ENCODE measurements at regions of chr3 and their contacts with region 1.

Region 1: GRCh38 chr3:130609166-130609979 is 92.4 kb downstream of the COL6A6 start:
- DNase-seq: peak; percentile 31 to 48
- ATAC-seq: peak; percentile 88 to 97 (median 92)
- H3K4me3 ChIP-seq: no peak overlapping the region
- H3K27ac ChIP-seq: no peak overlapping the region
- H3K4me1 ChIP-seq: no peaks in the 10 kb centered on the region
- H3K27me3 ChIP-seq: no peaks in the 10 kb centered on the region
- CTCF ChIP-seq: no peak

Region 2: DNA sequence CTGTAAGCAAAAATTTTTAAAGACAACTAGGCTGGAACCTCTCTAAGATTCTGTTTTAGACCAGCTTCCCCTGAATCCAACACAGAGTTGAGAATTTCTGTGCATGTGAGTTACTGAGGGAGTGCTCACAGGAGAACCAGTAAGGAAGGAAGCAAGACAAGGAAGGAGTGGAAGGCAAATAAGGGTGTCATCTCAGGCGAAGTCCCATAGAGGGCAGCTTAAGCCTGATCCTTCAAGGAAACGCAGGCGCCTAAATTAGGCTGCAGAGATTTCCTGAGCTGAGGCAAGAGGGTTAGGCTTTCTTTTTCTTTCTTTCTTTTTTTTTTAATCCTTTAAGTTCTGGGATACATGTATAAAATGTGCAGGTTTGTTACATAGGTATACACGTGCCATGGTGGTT is 128.6 kb before region 1 on chr3:
- intact Hi-C with region 1: loop called in 1 of 10 experiments (anchors 10 kb)
- DNase-seq: peak in 1 of 2 donors; percentile 12
- ATAC-seq: peak in 4 of 8 donors; percentile 55 to 69 (median 65)
- H3K4me3 ChIP-seq: no peak overlapping the region
- H3K27ac ChIP-seq: no peak overlapping the region
- H3K4me1 ChIP-seq: no peaks in the 10 kb centered on the region
- H3K27me3 ChIP-seq: no peaks in the 10 kb centered on the region
- CTCF ChIP-seq: peak in 7 of 9 donors; percentile 27 to 50 (median 38)

Region 3: GRCh38 chr3:130688015-130688688 is 78.8 kb after region 1 on chr3:
- intact Hi-C with region 1: no loop called
- DNase-seq: no peak
- ATAC-seq: no peak
- H3K4me3 ChIP-seq: no peak overlapping the region
- H3K27ac ChIP-seq: no peak overlapping the region
- H3K4me1 ChIP-seq: peaks cover 0 to 8% (median 0%) of the 10 kb centered on the region in 9 donors
- H3K27me3 ChIP-seq: no peaks in the 10 kb centered on the region
- CTCF ChIP-seq: no peak